Heart right ventricle (tissue), 16 donors: ENCODE measurements at regions of chr5 and their contacts with region 1.

Region 1: DNA sequence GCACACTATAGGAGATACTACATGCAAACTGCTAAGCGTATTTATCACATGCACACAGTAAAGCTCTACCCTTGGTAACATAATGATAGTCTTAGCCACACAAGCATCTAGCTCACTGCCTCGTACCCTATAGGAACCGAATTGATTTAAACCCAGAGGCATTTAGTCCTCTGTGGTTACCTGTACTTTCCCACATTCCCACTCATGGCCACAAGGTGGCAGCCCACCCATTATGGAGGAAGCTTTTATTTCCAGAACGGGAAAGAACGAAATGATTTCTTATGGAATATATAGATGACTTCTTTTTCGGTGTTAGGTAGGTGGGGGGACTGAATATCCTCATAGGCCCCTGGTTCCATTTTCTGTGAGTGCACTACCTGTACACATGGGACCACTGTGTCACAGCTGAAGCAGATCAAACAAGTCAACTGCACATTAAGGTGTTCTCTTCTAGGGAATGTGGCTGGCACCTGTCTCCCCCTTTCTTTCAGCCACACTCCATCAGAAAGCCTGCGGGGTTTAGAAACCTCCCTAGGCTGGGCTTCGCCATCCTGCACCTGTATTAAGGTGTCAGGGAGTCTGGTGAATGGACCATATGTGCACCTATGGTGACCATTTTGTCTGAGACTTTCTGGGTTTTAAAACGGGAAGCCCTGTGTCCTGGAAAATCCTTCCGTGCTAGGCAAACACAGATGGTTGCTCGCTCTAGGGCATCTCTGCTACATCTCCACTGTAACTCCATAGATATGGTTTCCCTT is 313.2 kb downstream of the SLIT3 start:
- DNase-seq: peak; percentile 64 to 68
- ATAC-seq: peak in 7 of 8 donors; percentile 39 to 70 (median 52)
- H3K4me3 ChIP-seq: no peak overlapping the region
- H3K27ac ChIP-seq: no peak overlapping the region
- H3K4me1 ChIP-seq: peaks cover 0 to 10% (median 4%) of the 10 kb centered on the region in 9 donors
- H3K27me3 ChIP-seq: peaks cover 0 to 28% (median 11%) of the 10 kb centered on the region in 7 donors
- CTCF ChIP-seq: peak; percentile 69 to 93 (median 89)

Region 2: GRCh38 chr5:168186289-168187074 is 801.2 kb before region 1 on chr5:
- intact Hi-C with region 1: no loop called
- DNase-seq: no peak
- ATAC-seq: peak in 7 of 8 donors; percentile 35 to 90 (median 80)
- H3K4me3 ChIP-seq: no peak overlapping the region
- H3K27ac ChIP-seq: peak overlapping the region; percentile 27 to 93 (median 75)
- H3K4me1 ChIP-seq: peaks cover 0 to 27% (median 19%) of the 10 kb centered on the region in 9 donors
- H3K27me3 ChIP-seq: no peaks in the 10 kb centered on the region
- CTCF ChIP-seq: no peak

Region 3: DNA sequence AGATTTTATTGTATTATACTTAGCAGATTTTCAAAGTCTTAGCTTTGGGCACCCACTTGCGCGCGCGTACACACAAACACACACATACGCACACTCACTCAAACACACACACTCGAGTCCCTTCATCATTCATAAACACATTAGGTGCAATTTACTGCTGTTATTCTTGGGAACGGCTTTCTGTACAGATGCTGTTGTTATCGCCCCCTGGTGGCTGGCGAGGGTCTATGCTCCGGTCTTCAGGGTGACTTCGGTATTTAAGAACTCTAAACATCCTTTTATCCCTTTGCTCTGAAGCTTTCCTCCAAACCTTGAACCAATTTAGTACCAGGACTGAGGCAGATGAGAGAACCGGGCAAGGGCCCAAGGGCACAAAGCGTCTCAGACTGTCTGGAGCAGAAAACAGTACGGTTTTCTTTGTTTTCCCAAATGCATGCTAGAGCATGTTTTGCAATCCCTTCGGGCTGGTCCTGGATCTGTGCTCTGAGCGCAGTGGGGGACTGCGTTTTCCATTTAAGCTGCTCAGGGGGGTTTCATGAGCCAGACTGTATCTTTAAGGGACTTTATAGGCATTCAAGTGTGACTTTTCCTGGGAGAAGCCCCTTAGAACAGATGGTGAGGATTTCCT is 314.9 kb after region 1 on chr5:
- intact Hi-C with region 1: loop called in 9 of 10 experiments (anchors 1 to 10 kb)
- DNase-seq: peak; percentile 61 to 64
- ATAC-seq: peak; percentile 31 to 69 (median 48)
- H3K4me3 ChIP-seq: no peak overlapping the region
- H3K27ac ChIP-seq: no peak overlapping the region
- H3K4me1 ChIP-seq: peaks cover 0 to 22% (median 7%) of the 10 kb centered on the region in 9 donors
- H3K27me3 ChIP-seq: peaks cover 0 to 76% (median 63%) of the 10 kb centered on the region in 7 donors
- CTCF ChIP-seq: peak; percentile 67 to 93 (median 89)

Region 4: GRCh38 chr5:169548315-169548714 is 560.6 kb after region 1 on chr5:
- intact Hi-C with region 1: loop called in 6 of 10 experiments (anchors 2 to 10 kb)
- DNase-seq: no peak
- ATAC-seq: peak in 6 of 8 donors; percentile 52 to 83 (median 70)
- H3K4me3 ChIP-seq: no peak overlapping the region
- H3K27ac ChIP-seq: no peak overlapping the region
- H3K4me1 ChIP-seq: peaks cover 0 to 9% (median 0%) of the 10 kb centered on the region in 9 donors
- H3K27me3 ChIP-seq: peaks cover 0 to 38% (median 22%) of the 10 kb centered on the region in 7 donors
- CTCF ChIP-seq: peak in 8 of 9 donors; percentile 21 to 70 (median 52)

Region 5: DNA sequence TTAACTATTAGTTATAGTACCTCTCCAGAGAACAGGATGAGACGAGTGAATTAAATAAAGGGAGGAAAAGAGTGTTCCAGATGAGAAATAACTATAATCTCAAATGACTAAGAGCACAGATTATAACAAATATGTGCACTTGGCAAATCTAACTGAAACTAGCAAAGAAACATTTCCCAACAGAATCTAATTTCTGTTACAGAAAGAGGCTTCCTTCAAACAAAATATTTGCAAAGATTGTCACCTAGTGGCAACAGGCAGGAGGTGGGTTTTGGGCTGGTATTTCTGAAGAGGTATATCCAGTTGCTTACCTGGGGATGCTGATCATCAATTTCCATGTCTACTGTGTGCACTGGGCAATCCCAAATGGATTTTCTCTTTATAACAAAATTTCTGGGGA is 590.2 kb after region 1 on chr5:
- intact Hi-C with region 1: loop called in 6 of 10 experiments (anchors 1 to 10 kb)
- DNase-seq: no peak
- ATAC-seq: no peak
- H3K4me3 ChIP-seq: no peak overlapping the region
- H3K27ac ChIP-seq: no peak overlapping the region
- H3K4me1 ChIP-seq: peaks cover 0 to 7% (median 2%) of the 10 kb centered on the region in 9 donors
- H3K27me3 ChIP-seq: peaks cover 0 to 37% (median 13%) of the 10 kb centered on the region in 7 donors
- CTCF ChIP-seq: peak in 3 of 9 donors; percentile 23 to 30 (median 30)